Ovary (tissue), 10 donors: ENCODE measurements at regions of chrX and their contacts with region 1.

Region 1: DNA sequence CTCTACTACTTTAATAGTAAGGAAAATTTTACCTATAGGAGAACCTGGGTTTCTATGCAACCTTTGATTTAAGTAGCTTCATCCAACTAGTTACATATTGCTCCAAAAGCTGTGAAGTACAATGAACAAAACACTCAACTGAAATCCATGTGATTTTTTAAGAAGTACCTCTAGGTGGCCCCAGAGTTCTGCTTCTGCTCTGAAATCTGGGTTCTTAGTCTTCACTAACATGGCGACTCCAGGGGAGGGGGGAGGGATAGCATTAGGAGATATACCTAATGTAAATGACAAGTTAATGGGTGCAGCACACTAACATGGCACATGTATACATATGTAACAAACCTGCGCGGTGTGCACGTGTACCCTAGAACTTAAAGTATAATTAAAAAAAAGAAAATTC is 73.4 kb upstream of the MAGEB2 start:
- DNase-seq: no peak
- H3K4me3 ChIP-seq: no peak overlapping the region
- H3K27ac ChIP-seq: no peak overlapping the region
- H3K4me1 ChIP-seq: no peaks in the 10 kb centered on the region
- H3K27me3 ChIP-seq: no peaks in the 10 kb centered on the region
- CTCF ChIP-seq: no peak
- EP300 ChIP-seq: no peak
- POLR2A ChIP-seq: no peak

Region 2: GRCh38 chrX:29172880-29173279 is 969.1 kb before region 1 on chrX:
- intact Hi-C with region 1: no loop called
- DNase-seq: no peak
- H3K4me3 ChIP-seq: no peak overlapping the region
- H3K27ac ChIP-seq: no peak overlapping the region
- H3K4me1 ChIP-seq: no peaks in the 10 kb centered on the region
- H3K27me3 ChIP-seq: no peaks in the 10 kb centered on the region
- CTCF ChIP-seq: no peak
- EP300 ChIP-seq: no peak
- POLR2A ChIP-seq: no peak

Region 3: GRCh38 chrX:30196322-30196721 is 54.4 kb after region 1 on chrX:
- intact Hi-C with region 1: no loop called
- DNase-seq: no peak
- H3K4me3 ChIP-seq: no peak overlapping the region
- H3K27ac ChIP-seq: no peak overlapping the region
- H3K4me1 ChIP-seq: no peaks in the 10 kb centered on the region
- H3K27me3 ChIP-seq: no peaks in the 10 kb centered on the region
- CTCF ChIP-seq: no peak
- EP300 ChIP-seq: no peak
- POLR2A ChIP-seq: no peak

Region 4: DNA sequence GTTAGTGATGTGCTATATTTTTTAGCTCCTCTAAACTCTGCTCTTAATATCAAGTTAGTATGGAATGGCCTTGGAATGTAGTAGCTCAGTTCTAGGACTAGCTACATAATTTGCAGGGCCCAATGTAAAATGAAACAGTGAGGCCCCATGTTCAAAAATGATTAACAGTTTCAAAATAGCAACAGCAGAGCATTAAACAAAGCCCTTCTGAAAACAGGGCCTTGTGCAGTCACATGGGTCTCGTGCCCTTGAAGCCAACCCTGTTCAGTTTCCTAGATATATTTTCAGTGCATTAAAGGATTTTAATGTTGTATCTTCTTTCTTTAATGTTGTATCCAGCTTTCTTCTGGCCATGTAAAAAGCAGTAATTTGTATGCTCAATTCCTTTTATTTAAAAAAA is 353.5 kb after region 1 on chrX:
- intact Hi-C with region 1: loop called in 1 of 4 experiments (anchors 10 kb)
- DNase-seq: no peak
- H3K4me3 ChIP-seq: no peak overlapping the region
- H3K27ac ChIP-seq: no peak overlapping the region
- H3K4me1 ChIP-seq: peaks cover 2% of the 10 kb centered on the region
- H3K27me3 ChIP-seq: no peaks in the 10 kb centered on the region
- CTCF ChIP-seq: no peak
- EP300 ChIP-seq: no peak
- POLR2A ChIP-seq: no peak